AG04449 (cell line): ENCODE measurements at regions of chr17 and their contacts with region 1.

Region 1: DNA sequence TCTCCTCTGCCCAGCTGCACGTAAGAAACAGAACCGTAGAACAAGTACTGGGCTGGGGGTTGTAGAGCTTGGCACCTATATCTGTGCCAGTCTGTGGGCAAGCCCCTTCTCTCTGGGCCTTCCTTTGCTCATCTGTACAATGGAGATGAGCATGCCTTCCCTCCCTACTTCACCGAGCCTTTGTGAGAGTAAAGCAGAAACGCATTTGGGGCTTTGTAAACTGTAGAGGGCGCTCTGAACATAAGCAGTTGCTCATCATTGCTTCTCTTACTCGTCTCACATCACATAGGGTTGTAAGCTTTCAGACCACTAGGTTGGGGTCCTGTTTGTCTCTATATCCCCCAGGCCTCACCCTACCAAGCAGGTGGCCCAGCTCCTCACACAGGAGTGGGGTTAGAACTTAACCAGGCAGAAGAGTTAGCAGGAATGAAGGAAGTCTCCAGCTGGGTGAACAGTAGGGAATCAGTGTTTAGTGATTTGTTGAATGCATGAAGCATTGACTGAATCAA is 15.1 kb downstream of the SAMD14 start:
- DNase-seq: no peak
- H3K4me3 ChIP-seq: no peak overlapping the region
- CTCF ChIP-seq: peak; percentile 69

Region 2: DNA sequence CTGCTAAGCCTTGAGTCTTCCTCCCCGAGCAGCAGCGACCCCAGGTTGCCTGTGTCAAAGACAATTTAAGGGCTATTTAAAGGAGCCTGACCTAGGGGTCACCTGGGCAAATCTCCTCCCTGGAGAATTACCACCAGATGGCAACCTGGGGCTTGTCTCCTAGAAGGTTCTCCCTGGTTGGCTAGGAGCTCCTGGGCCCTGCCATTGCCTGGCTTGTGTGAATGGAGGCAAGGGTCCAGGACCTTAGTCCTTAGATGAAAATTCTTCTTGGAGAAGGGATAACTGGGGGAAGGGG is 215.8 kb before region 1 on chr17:
- CTCF ChIA-PET with region 1: no interaction called
- POLR2A ChIA-PET with region 1: no interaction called
- DNase-seq: no peak
- H3K4me3 ChIP-seq: no peak overlapping the region
- CTCF ChIP-seq: no peak

Region 3: GRCh38 chr17:50101346-50102163 is 13.3 kb before region 1 on chr17:
- CTCF ChIA-PET with region 1: interaction called, 92 read pairs
- POLR2A ChIA-PET with region 1: no interaction called
- DNase-seq: no peak
- H3K4me3 ChIP-seq: no peak overlapping the region
- CTCF ChIP-seq: no peak

Region 4: DNA sequence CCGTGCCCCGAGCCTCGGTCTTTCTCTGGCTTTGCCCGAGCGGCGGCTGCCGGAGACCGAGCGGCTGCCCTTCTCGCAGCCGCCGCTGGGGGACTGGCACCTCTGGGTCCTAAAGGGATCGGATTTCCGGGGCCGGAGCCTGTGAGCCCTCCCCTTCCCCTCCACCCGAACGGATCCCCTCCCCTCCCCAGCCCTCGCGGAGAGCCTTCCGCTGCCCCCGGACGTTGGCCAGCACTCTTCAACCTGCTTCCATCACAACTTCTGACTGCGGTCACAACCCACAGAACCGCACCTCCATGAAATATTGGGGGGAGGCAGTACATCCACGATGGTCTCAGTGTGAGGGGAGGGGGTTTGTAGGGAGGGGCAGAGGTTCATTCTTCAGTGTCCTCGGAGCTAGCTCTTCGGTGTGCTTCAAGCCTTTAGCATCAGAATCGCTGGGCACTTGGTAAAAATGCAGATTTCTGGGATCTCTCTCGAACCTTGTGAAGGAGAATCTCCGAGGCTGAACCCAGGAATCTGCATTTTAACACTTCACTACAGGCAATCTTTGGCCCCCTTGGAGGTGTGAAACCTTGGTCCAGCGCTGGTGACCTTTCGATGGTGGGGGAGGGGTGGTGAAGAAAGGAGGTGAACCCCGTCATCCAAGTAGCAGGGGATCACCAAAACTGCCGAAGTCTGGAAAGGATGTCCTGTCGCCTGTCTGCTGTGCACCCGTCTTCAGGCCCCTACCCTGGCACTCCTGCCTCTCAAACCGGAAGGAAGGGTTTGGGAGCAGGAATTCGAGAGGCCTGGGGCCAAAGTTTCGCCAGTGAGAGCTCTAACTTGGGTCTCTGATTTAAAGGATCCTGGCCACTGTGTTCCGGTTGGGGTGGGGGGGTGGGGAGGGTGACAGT is 36.4 kb after region 1 on chr17:
- CTCF ChIA-PET with region 1: interaction called, 11 read pairs
- POLR2A ChIA-PET with region 1: interaction called, 4 read pairs
- DNase-seq: no peak
- H3K4me3 ChIP-seq: peak overlapping the region; percentile 77
- CTCF ChIP-seq: peak; percentile 81